Posterior vena cava (tissue), 2 donors: ENCODE measurements at regions of chr19 and their contacts with region 1.

Region 1: DNA sequence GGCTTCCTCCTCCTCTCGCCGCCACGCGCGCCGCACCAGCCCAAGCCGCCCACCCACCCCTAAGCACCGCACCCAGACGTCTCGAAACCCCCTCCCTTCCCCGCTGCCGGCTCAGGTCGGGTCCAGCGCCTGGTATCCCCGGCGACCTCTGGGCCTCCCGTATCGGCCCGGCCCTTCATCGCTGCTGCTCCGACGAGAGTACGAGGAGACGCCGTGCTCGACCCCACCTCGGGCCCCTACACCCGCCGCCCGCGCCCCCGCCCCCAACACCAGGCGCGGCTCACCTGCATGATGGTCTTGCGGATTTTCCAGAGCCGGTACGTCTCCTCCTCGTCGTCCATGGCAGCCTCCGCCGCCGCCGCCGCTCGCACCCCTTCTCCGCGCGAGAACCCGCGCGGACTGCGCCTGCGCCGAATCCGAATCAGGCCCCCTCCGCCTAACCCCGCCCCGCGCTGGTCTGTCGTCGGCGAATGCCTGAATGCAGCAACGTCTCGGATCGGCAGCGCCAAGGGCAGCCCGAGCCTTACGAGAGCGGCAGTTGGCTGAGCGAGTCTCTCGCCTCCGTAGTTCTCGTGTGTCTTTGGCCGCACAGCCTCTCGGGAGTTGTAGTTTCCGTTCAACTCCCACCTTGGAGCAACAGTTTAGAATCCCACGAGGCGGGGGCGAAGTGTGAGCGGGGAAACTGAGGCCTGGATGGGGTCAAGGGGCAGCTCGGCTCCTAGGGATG is at the start of gene POLR2E:
- DNase-seq: peak; percentile 100
- total RNA-seq, gene POLR2E: 89.9 to 105 TPM

Region 2: DNA sequence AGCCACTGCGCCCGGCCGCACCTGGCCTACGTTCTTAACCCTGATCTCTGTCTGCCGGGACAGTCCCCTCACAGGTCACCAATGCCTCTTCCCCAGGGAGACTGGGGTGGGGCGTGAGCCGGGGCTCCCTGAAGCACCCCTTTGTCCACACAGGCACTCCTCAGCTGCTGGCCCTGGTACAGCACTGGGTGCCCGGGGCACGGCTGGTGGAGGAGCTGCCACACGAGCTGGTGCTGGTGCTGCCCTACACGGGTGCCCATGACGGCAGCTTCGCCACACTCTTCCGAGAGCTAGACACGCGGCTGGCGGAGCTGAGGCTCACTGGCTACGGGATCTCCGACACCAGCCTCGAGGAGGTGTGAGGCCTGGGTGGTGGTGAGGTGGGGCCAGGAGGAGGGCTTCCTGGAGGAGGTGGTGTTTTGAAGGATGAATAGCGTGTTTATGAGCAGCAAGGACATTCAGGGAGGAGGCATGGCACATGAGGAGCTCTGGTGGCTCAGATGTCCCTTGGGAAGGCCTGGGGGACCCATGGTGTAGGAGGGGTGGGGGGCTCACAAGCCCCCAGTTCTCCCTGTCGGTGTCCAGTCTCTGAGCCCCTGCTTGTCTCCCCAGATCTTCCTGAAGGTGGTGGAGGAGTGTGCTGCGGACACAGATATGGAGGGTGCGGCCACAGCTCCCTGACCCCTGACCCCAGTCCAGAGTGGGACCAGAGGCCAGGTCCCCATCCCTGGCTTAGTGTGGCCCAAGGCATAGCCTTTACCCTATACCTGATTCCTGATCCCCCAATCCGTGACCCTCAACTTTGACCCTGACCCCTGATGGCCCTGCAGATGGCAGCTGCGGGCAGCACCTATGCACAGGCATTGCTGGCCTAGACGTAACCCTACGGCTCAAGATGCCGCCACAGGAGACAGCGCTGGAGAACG is 41.7 kb before region 1 on chr19:
- intact Hi-C with region 1: loop called in 1 of 2 experiments (anchors 1 kb)
- DNase-seq: no peak

Region 3: DNA sequence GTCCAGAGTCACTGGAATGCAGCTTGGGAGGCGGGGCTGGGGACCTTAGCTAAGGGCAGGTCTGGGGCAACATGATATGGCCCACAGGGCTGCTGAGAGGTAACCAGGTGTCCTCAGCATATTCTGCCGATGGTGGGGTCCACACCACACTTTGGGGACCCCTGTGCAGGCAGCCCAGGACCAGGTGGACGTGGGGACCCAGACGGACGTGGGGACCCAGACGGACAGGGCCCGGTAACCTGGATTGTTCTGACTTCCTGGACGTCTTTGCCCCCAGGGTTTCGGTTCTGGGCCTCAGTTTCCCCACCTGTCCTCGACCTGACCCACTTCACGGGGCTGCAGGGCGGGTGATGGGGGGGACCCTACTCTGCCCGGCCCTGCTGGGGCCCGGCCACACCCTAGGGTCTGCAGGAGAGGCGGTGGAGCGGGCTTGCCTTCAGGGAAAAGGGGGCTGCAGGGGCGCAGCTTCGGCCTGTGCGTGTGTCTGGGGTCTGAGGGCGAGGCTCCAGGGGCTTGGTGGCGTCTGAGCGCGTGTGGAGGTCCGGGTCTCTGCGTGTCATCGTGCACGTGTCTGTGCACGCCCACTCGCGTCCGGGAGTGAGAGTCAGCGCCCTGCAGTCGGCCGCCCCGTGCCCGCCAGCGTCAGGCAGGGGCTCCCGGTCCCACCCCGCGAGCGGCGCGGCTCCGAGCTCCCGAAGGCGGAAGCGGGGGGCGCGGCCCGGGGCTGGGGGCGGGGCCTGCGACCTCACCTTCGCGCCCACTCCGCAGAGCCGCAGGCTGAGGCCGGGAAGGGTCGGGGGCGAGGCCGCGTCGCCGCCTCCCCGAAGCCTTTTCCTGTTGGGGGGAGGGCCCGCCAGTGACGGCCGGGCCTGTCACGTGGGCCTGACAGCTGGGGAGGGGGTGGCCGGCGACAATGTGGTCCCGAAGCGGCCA is 28.5 kb before region 1 on chr19 and contains the start of gene ARHGAP45:
- intact Hi-C with region 1: loop called in 1 of 2 experiments (anchors 1 kb)
- DNase-seq: no peak
- total RNA-seq, gene ARHGAP45: 10.0 to 26.8 TPM

Region 4: DNA sequence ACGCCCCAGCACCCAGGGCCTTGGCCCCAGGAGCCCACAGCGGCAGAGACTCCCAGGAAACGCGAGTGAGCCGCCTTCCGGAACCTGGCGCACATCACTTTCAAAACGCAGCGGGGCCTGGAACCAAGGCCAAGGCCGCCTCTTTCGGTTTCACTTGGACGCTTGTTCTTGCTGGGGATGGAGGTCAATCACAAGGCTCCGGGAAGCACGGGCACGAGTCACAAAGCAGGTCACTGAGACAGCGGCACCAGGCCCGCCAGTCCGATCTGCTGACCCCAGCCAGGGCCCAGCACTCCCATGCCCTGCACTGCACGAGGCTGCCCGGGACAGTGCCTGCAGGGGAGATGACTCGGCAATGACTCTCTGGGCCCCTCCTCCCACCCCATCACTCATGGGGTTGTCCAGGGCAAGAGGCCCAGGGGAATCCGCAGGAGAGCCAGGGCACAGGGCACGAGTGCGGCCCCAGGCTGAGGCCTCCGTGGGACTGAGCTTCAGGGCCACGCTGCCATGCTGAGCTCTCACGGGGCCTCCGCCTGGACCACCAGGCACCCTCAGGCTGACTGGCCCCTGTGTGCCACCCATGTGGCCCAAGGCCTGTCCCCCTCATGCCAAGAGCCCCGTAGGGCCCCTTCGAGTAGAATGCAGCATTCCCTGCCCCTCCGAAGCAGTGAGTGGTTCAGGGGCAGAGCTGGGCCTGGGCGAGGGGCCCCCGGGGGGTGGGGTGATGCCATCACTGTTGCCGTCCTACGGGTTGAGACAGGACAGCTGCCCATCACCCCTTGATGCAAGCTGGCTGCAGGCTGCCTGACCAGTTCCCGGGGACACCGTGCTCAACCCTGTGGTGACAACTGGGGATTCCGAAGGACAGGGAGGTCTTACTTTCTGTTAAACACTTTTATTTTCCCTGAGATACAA is 74.0 kb after region 1 on chr19:
- intact Hi-C with region 1: no loop called
- DNase-seq: peak; percentile 84

Region 5: GRCh38 chr19:1429750-1430149 is 334.6 kb after region 1 on chr19:
- intact Hi-C with region 1: no loop called
- DNase-seq: no peak